Heart right ventricle (tissue), 16 donors: ENCODE measurements at regions of chr10 and their contacts with region 1.

Region 1: GRCh38 chr10:90969947-90970684 is 49.2 kb upstream of the ANKRD1 start:
- DNase-seq: no peak
- ATAC-seq: peak in 7 of 8 donors; percentile 35 to 80 (median 59)
- H3K4me3 ChIP-seq: peak overlapping the region in 2 of 10 donors; percentile 25 to 44
- H3K27ac ChIP-seq: peak overlapping the region in 8 of 10 donors; percentile 21 to 77 (median 61)
- H3K4me1 ChIP-seq: peaks cover 5 to 44% (median 18%) of the 10 kb centered on the region in 9 donors
- H3K27me3 ChIP-seq: no peaks in the 10 kb centered on the region
- CTCF ChIP-seq: peak in 4 of 9 donors; percentile 18 to 46 (median 37)

Region 2: GRCh38 chr10:90912174-90912573 is 57.9 kb before region 1 on chr10:
- intact Hi-C with region 1: loop called in 1 of 10 experiments (anchors 2 kb)
- DNase-seq: no peak
- ATAC-seq: peak in 2 of 8 donors; percentile 3 to 6
- H3K4me3 ChIP-seq: no peak overlapping the region
- H3K27ac ChIP-seq: peak overlapping the region in 4 of 10 donors; percentile 6 to 27 (median 22)
- H3K4me1 ChIP-seq: peaks cover 0 to 9% (median 0%) of the 10 kb centered on the region in 9 donors
- H3K27me3 ChIP-seq: no peaks in the 10 kb centered on the region
- CTCF ChIP-seq: no peak

Region 3: DNA sequence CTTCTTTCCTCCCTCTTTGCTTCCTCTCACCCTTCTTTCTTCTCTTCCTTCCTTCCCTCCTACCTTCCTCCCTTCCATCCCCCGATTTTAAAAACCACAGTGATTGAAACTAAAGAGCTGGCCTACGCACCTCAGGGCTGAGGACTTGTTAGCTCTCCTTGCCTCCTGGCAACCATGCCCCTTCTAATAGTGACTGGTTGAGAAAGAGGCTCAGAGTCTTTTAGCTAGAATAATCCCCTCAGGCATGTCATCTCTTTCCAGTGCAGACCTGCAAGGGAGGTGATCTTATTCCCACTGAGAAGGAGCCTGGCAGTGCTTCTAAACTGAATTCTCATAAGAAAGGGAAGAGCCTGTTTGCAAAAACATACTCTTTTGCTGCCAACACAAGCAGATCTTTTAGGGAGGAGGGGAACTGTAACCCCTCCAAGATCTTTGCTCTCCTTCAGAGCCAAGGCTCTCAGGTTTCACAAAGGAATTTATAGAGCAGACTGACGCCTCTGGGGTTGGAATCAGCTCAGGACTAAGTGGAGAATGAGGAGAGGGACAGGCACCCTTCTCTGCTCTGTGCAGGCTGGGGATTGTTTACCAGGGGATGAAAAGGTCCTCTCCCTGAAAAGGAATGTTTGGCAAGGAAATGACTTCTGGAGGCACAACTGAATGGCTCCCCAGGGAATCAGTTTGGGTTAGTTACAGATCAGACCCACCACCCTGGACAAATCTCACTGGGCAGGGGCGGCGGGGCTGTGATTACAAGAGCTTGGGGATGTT is 39.9 kb before region 1 on chr10:
- intact Hi-C with region 1: loop called in 2 of 10 experiments (anchors 5 kb)
- DNase-seq: peak in 1 of 2 donors; percentile 15
- ATAC-seq: peak; percentile 79 to 89 (median 86)
- H3K4me3 ChIP-seq: peak overlapping the region in 2 of 10 donors; percentile 10 to 12
- H3K27ac ChIP-seq: peak overlapping the region; percentile 63 to 94 (median 84)
- H3K4me1 ChIP-seq: peaks cover 10 to 36% (median 29%) of the 10 kb centered on the region in 9 donors
- H3K27me3 ChIP-seq: no peaks in the 10 kb centered on the region
- CTCF ChIP-seq: no peak

Region 4: DNA sequence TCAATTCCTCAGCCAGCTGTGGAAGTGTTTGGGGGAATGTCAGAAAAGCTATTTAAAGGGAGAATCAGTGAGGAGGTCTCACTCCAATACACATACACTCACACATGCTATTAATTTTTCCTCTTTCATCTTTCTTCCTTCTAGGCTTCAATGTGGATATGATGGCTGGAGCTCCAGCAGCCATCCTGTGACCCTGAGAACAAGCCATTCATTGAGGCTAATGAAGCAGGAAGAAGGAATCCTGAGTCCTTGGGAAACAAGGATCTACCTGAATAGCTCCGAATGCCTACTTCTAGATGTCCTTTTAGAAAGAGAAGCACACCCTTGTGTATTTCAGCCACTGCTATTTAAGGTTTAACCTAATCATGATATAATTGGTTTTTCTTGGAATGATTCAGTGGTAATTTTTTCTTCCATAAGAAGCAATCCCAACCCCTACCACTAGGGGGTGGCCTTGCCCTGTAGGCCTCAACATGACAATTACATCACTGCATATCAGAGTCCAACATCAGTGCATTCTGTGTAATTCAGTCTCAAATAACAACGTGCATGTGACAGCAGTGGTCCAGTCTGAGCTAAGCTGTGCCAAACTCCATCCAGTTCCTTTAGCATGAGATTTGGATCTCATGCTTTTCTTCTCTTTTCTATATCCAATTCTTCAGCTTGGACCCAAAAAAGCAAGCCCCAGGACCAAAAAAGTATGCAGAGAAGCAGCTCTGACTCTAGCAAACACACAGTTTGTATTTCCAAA is 36.1 kb after region 1 on chr10:
- intact Hi-C with region 1: no loop called
- DNase-seq: peak in 1 of 2 donors; percentile 51
- ATAC-seq: peak; percentile 66 to 90 (median 80)
- H3K4me3 ChIP-seq: no peak overlapping the region
- H3K27ac ChIP-seq: peak overlapping the region in 5 of 10 donors; percentile 35 to 57 (median 42)
- H3K4me1 ChIP-seq: peaks cover 0 to 21% (median 13%) of the 10 kb centered on the region in 9 donors
- H3K27me3 ChIP-seq: no peaks in the 10 kb centered on the region
- CTCF ChIP-seq: peak; percentile 88 to 96 (median 92)